Common myeloid progenitor, CD34-positive (primary cell): ENCODE measurements at regions of chr1 and their contacts with region 1.

Region 1: GRCh38 chr1:207004981-207005830 is 27.4 kb downstream of the C1orf116 start:
- DNase-seq: peak; percentile 31 to 56 (median 51)
- H3K4me3 ChIP-seq: peak overlapping the region in 1 of 7 experiments; percentile 51
- H3K27ac ChIP-seq: no peak overlapping the region
- H3K4me1 ChIP-seq: peaks cover 0 to 7% (median 0%) of the 10 kb centered on the region in 4 experiments
- H3K27me3 ChIP-seq: no peaks in the 10 kb centered on the region

Region 2: GRCh38 chr1:207015791-207016190 is 10.6 kb after region 1 on chr1:
- CTCF ChIA-PET with region 1: interaction called, 67 read pairs
- POLR2A ChIA-PET with region 1: no interaction called
- DNase-seq: no peak
- H3K4me3 ChIP-seq: no peak overlapping the region
- H3K27ac ChIP-seq: no peak overlapping the region
- H3K4me1 ChIP-seq: peaks cover 0 to 5% (median under 1%) of the 10 kb centered on the region in 4 experiments
- H3K27me3 ChIP-seq: no peaks in the 10 kb centered on the region

Region 3: GRCh38 chr1:207025144-207025880 is 20.1 kb after region 1 on chr1:
- CTCF ChIA-PET with region 1: interaction called, 67 read pairs
- POLR2A ChIA-PET with region 1: no interaction called
- DNase-seq: peak in 2 of 3 donors; percentile 26 to 28
- H3K4me3 ChIP-seq: no peak overlapping the region
- H3K27ac ChIP-seq: peak overlapping the region in 1 of 2 experiments; percentile 78
- H3K4me1 ChIP-seq: peaks cover 12 to 33% (median 26%) of the 10 kb centered on the region in 4 experiments
- H3K27me3 ChIP-seq: no peaks in the 10 kb centered on the region

Region 4: GRCh38 chr1:207186503-207186902 is 181.3 kb after region 1 on chr1:
- CTCF ChIA-PET with region 1: no interaction called
- POLR2A ChIA-PET with region 1: no interaction called
- DNase-seq: no peak
- H3K4me3 ChIP-seq: no peak overlapping the region
- H3K27ac ChIP-seq: no peak overlapping the region
- H3K4me1 ChIP-seq: peaks cover 0 to 3% (median 0%) of the 10 kb centered on the region in 4 experiments
- H3K27me3 ChIP-seq: no peaks in the 10 kb centered on the region